Breast epithelium (tissue), 4 donors: ENCODE measurements at regions of chr10 and their contacts with region 1.

Region 1: GRCh38 chr10:118241229-118242137 is 100.6 kb downstream of the FAM204A start:
- DNase-seq: peak; percentile 66 to 81
- H3K4me3 ChIP-seq: no peak overlapping the region
- H3K27ac ChIP-seq: no peak overlapping the region
- H3K4me1 ChIP-seq: no peaks in the 10 kb centered on the region
- H3K27me3 ChIP-seq: peaks cover 0 to 60% of the 10 kb centered on the region in 2 donors
- CTCF ChIP-seq: peak; percentile 80 to 91 (median 89)
- POLR2A ChIP-seq: no peak

Region 2: DNA sequence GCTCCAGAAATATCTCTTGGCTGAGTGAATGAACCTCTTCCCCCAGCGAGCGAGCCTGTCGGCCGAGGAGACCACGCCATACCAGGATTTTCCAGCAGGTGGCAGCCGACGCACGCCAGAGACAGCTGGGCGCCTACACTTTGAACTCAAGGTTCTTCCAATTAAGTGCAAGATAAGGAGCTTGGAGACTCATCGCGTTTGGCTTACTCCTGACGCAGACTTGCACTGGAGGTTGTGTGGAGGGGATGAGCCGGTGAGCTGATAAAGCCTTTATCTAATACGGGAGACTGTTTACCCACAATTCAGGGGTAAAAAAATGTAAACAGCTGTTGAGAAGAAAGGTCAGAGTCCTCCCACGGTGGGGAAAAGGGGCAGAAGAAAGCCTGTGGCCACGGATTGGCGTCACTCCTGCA is 744.9 kb before region 1 on chr10:
- intact Hi-C with region 1: loop called (anchors 10 kb)
- DNase-seq: peak; percentile 57 to 75
- H3K4me3 ChIP-seq: no peak overlapping the region
- H3K27ac ChIP-seq: no peak overlapping the region
- H3K4me1 ChIP-seq: no peaks in the 10 kb centered on the region
- H3K27me3 ChIP-seq: no peaks in the 10 kb centered on the region
- CTCF ChIP-seq: peak; percentile 80 to 91 (median 86)
- POLR2A ChIP-seq: no peak

Region 3: GRCh38 chr10:118405928-118406327 is 164.4 kb after region 1 on chr10:
- intact Hi-C with region 1: no loop called
- DNase-seq: no peak
- H3K4me3 ChIP-seq: no peak overlapping the region
- H3K27ac ChIP-seq: no peak overlapping the region
- H3K4me1 ChIP-seq: no peaks in the 10 kb centered on the region
- H3K27me3 ChIP-seq: peaks cover 0 to 12% of the 10 kb centered on the region in 2 donors
- CTCF ChIP-seq: no peak
- POLR2A ChIP-seq: no peak